Posterior vena cava (tissue), 2 donors: ENCODE measurements at regions of chr12 and their contacts with region 1.

Region 1: DNA sequence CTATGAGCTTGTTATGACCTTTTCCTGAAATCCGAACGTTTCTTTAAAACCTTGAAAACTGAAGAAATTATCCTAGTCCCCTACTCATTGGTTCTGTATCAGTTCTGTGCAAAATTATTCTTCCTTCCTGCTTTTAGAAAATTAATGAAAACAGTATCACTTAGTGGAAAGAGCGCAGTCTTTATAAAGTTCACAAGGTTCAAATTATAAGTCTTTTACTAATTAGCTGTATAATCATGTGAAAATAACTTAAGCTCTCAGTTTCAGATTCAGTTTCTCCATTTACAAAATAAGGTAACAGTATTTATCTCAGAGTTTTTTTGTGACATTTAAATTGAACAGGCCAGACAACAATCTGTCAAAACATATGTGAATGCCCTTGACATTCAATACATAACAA is 306.1 kb downstream of the ADAMTS20 start:
- DNase-seq: no peak

Region 2: GRCh38 chr12:43198608-43199007 is 47.3 kb before region 1 on chr12:
- intact Hi-C with region 1: loop called in 1 of 2 experiments (anchors 2 kb)
- DNase-seq: no peak

Region 3: DNA sequence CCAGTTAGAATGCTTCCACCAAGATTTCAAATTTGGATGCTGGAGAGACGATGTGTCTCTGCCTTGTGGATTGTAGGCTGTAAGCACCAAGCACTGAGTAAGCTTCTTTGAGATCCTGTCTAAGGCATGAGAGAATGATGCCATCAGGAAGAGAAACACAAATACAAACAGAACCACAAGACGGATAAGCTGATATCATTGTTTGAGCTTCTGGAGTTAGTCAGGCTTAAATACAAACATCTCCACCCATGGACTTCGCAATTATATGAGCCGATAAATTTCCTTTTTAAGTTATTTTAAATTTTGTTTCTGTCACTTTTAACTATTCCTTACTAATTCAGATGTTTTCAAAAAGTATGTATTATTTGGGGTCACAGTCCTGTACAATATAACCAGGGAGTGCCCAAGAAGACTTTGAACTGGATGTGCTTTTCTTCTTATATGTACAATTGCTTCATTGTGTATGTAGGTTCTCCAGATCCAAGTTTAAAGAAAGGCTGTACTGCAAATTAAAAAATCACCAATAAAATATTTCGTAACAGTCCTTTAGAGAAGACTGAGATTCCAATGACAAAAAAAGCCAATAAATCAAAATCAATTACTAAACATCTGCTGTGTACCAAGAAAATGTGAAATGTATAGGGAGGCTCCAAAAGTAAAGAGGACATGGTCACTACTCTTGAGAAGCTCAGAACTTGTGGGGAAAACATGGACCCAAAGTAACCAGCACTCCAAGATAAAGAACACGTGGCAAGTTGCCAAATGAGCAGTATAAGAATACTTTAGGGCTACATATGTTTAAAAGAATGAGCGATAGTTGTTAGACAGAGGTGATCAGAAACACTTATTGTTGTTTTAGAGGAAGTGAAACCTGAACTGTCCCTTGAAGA is 31.9 kb after region 1 on chr12:
- intact Hi-C with region 1: no loop called
- DNase-seq: no peak